Adrenal gland (tissue), 19 donors: ENCODE measurements at regions of chr16 and their contacts with region 1.

Region 1: GRCh38 chr16:6645768-6646568 is 686.7 kb upstream of the RBFOX1 start:
- DNase-seq: no peak
- H3K4me3 ChIP-seq: no peak overlapping the region
- H3K27ac ChIP-seq: no peak overlapping the region
- H3K4me1 ChIP-seq: no peaks in the 10 kb centered on the region
- H3K27me3 ChIP-seq: peaks cover 7% of the 10 kb centered on the region
- CTCF ChIP-seq: no peak
- POLR2A ChIP-seq: no peak

Region 2: DNA sequence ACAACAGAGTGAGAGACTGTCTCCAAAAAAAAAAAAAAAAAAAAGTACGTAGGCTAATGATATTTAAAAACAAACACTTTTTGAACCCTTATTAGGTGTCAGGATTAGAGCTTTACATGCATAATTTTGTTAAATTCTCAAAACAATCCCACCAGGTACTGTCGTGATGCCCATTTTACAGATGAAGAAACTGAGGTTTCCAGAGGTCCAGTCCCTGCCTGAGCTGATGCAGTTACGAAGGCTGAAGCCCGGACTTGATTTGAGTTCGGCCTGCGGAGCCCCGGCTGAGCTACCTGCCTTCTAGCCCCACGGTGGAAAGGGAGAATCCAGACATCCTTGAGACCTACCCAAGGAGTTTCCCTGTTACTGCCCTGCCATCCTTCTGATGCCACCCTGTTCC is 1410.8 kb before region 1 on chr16:
- intact Hi-C with region 1: loop called in 1 of 2 experiments (anchors 5 kb)
- DNase-seq: no peak
- H3K4me3 ChIP-seq: no peak overlapping the region
- H3K27ac ChIP-seq: no peak overlapping the region
- H3K4me1 ChIP-seq: no peaks in the 10 kb centered on the region
- H3K27me3 ChIP-seq: no peaks in the 10 kb centered on the region
- CTCF ChIP-seq: no peak
- POLR2A ChIP-seq: no peak

Region 3: DNA sequence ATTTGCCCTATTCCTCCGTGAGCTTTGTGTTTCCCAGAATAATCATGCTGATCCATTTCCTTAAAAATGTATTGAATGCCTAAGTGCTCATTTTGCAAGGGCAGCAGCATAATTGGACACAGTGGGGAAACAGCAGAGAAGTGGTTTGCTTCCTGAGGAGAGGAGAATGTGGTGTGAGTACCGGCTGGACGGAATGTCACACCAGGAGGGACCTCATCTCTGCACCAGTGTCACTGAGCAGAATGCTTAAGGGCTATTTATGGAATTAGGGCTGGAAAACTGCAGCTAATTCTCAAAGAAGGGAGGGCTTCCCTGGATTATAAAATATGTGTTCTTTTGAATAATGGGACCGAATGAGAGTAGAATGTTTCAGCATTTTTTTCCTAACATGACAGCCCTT is 413.9 kb before region 1 on chr16:
- intact Hi-C with region 1: no loop called
- DNase-seq: no peak
- H3K4me3 ChIP-seq: no peak overlapping the region
- H3K27ac ChIP-seq: no peak overlapping the region
- H3K4me1 ChIP-seq: no peaks in the 10 kb centered on the region
- H3K27me3 ChIP-seq: no peaks in the 10 kb centered on the region
- CTCF ChIP-seq: no peak
- POLR2A ChIP-seq: no peak